AG04450 (cell line): ENCODE measurements at regions of chr20 and their contacts with region 1.

Region 1: DNA sequence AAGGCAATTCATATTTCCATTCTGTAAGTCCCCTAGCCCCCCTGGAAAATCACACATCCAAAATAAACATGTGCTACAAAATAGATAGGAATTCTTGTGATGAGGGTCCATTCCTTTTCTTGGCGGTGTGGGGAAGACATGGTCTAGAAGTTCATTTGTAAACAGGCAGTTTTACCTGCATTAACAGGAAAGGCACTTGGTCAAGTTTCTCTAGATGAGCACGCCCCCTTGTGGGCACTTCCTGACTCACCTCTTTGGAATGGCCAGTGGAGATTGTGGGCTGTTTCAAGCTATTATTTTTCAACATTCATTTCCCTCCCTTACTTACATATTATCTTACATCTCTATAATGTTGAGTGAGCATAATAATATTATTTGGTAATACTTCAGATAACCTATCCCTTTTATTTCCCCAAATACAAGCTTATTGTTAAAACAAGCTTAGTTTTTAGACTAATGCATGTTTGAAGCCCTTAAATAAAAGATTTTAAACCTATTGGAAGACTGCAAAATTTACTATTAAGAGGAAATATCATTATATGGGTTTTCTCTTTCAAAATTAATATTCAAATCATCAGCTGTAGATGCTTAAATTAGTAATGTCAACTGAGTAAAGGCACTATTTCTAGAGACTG is 92.1 kb downstream of the TASP1 start:
- DNase-seq: peak; percentile 30
- H3K4me3 ChIP-seq: no peak overlapping the region
- H3K27ac ChIP-seq: no peak overlapping the region
- H3K27me3 ChIP-seq: no peaks in the 10 kb centered on the region
- CTCF ChIP-seq: peak; percentile 75

Region 2: DNA sequence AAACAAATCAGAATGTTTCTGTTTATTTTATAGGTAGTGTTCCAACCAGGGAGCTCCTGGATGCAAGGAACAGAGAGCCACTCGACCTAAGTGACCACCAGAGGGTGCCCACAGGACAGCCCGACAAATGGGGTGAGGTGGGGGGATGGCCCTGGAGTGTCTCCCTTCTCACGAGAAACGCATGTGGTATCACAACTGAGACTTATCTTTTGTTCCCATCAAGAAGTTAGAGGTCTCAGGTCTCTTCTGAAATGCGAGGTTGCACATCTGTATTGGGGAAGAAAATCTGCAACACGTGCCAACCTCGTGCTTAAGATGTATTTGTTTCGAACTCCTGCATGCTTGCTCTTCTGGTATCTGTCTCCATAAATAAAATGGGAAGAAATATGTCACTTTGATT is 221.6 kb before region 1 on chr20:
- CTCF ChIA-PET with region 1: interaction called, 85 read pairs
- POLR2A ChIA-PET with region 1: no interaction called
- DNase-seq: no peak
- H3K4me3 ChIP-seq: no peak overlapping the region
- H3K27ac ChIP-seq: no peak overlapping the region
- H3K27me3 ChIP-seq: no peaks in the 10 kb centered on the region
- CTCF ChIP-seq: peak; percentile 64

Region 3: DNA sequence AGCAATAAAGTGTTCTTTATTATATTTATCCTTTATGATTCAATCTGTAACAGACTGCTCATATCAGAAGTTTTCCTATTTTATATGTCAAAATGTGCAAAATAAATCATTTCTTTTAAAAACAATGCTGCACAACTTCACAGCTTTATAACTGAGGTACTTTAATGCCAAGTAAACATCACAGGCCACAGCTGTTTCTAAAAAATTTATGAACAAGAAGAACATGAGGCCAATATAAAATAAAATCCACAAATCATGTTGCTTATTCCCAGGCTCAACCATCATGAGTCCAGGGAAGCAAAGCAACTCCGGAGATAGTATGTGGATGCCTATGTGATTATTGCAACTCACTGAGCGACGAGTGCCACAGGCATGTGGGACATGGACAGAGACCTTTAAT is 130.1 kb before region 1 on chr20:
- CTCF ChIA-PET with region 1: interaction called, 12 read pairs
- POLR2A ChIA-PET with region 1: no interaction called
- DNase-seq: no peak
- H3K4me3 ChIP-seq: no peak overlapping the region
- H3K27ac ChIP-seq: no peak overlapping the region
- H3K27me3 ChIP-seq: no peaks in the 10 kb centered on the region
- CTCF ChIP-seq: no peak

Region 4: GRCh38 chr20:13492001-13492481 is 54.6 kb before region 1 on chr20:
- CTCF ChIA-PET with region 1: interaction called, 14 read pairs
- POLR2A ChIA-PET with region 1: no interaction called
- DNase-seq: peak; percentile 29
- H3K4me3 ChIP-seq: no peak overlapping the region
- H3K27ac ChIP-seq: peak overlapping the region; percentile 77
- H3K27me3 ChIP-seq: no peaks in the 10 kb centered on the region
- CTCF ChIP-seq: peak; percentile 19; the same call in 1 of the 2 replicates

Region 5: GRCh38 chr20:13567663-13568062 is 21.0 kb after region 1 on chr20:
- CTCF ChIA-PET with region 1: interaction called, 86 read pairs
- POLR2A ChIA-PET with region 1: no interaction called
- DNase-seq: no peak
- H3K4me3 ChIP-seq: no peak overlapping the region
- H3K27ac ChIP-seq: no peak overlapping the region
- H3K27me3 ChIP-seq: no peaks in the 10 kb centered on the region
- CTCF ChIP-seq: no peak

Region 6: DNA sequence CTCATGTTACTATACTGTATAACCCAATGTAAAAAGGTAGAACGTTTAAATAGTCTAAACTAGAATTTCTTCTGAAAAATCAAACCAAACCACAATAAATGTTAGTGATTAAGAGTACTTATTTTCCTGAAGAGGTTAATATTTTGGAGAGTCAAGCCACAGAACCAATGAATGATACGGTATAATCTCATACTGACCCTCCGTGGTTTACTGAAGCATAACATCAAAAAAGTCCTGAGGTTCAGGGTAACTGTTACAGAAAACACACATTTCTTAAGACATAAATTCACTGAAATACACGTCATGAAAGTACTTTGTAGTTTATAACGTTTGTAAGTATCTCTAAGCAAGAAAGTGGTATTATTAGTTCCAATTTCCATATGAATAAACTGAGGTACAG is 209.2 kb after region 1 on chr20:
- CTCF ChIA-PET with region 1: interaction called, 18 read pairs
- POLR2A ChIA-PET with region 1: no interaction called
- DNase-seq: no peak
- H3K4me3 ChIP-seq: no peak overlapping the region
- H3K27ac ChIP-seq: no peak overlapping the region
- H3K27me3 ChIP-seq: no peaks in the 10 kb centered on the region
- CTCF ChIP-seq: no peak